ENCODE measurements at regions of chr12 and their contacts with region 1.

Region 1: DNA sequence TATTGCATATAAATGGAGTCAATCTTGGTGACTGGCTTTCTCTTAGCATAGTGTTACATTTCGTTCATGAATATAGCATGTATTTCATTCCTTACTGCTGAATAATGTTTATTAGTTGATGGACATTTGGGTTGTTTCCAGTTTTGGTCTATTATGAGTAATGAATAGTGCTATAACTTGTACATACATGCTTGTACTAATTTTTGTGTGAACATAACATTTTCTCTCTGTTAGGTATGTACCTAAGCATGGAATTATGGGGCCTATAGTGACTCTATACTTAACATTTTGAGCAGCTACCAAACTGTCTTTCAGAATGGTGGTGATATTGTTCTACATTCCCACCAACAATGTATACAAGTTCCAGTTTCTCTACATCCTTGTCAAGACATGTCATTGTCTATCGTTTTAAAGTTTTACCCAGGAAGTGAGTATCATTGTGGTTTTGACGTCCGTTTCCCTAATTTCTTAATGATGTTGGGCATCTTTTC is 23.1 kb downstream of the ATP2A2 start:
- DNase-seq: peak; percentile 93
- ATAC-seq: peak; percentile 75
- H3K4me3 ChIP-seq: no peak overlapping the region
- H3K27ac ChIP-seq: peak overlapping the region; percentile 67
- H3K4me1 ChIP-seq: peaks cover 50% of the 10 kb centered on the region
- H3K27me3 ChIP-seq: no peaks in the 10 kb centered on the region
- CTCF ChIP-seq: no peak

Region 2: DNA sequence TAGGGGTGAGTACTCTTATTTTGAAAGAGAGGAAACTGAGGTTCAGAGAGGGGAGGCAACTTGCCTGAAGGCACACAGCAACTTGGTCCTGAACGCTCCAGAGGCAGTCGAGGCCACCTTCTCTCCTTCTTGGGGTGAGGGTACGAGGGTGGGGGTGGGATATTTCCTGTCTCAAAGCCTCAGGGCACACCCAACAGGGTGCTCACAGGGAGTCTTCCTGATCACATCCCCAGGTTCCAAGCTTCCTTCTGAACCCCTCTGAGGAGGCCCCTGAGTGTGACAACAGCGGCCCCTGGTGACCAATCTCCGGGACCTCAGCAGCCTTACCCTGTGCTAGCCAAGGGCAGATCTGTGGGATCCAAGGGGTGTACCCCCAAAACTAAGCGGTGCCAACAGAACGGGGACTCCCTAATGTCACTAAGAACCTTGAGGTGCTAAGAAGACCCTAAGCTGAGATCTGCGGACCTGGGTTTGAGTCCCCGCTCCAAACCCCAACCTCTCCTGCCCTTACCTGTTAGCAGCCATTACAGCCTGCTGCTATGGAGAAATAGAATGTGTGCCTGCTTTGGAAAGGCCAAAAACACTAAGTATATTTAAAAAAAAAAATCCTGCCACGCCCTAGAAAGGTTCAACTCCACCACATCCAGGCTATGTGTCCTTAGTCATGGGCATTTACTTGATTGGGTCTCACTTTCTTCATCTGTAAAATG is 528.8 kb before region 1 on chr12:
- CTCF ChIA-PET with region 1: no interaction called
- POLR2A ChIA-PET with region 1: no interaction called
- intact Hi-C with region 1: no loop called
- DNase-seq: peak; percentile 83
- ATAC-seq: peak; percentile 62
- H3K4me3 ChIP-seq: no peak overlapping the region
- H3K27ac ChIP-seq: no peak overlapping the region
- H3K4me1 ChIP-seq: peaks cover 27% of the 10 kb centered on the region
- H3K27me3 ChIP-seq: no peaks in the 10 kb centered on the region
- CTCF ChIP-seq: peak; percentile 99

Region 3: DNA sequence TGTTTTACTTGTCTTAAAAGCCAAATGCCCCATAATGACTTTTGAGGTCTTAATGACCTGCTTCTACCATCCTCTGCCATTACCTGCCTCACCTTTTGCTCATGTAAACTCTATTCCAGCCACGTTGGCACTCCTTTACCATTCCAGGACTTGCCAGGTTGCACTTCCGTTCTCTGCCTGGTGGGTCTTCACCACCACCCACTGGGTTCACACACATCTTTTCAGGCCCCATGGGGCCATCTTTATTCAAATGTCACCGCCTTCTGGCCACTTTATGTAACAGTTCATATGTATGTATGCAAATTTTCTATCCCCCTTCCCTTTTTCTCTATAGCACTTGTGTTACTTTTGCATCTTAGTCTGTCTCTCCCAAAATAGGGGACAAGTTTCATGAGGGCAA is 34.6 kb after region 1 on chr12:
- CTCF ChIA-PET with region 1: no interaction called
- POLR2A ChIA-PET with region 1: no interaction called
- intact Hi-C with region 1: loop called (anchors 1 kb)
- DNase-seq: peak; percentile 25
- ATAC-seq: peak; percentile 8; the same call in 1 of the 2 replicates
- H3K4me3 ChIP-seq: no peak overlapping the region
- H3K27ac ChIP-seq: peak overlapping the region; percentile 73
- H3K4me1 ChIP-seq: peaks cover 21% of the 10 kb centered on the region
- H3K27me3 ChIP-seq: no peaks in the 10 kb centered on the region
- CTCF ChIP-seq: peak; percentile 61

Region 4: DNA sequence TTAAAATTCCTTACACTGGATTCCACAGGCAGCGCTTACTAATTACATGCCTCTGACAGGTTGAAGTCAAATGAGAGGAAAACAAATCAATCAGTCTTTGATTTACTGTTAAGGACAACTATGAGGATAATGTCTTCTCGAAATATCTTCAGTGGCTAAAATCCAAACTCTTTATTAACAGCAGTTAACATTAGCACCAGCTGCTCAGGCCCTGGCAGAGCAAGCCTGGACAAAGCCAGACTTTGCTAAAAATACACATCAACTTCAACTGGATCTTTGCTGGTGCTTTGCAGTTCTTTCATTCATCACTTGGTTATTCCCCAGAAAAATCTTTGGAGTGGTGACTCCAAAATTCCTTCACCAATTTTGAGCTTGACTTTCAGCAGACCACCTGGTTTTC is 1979.4 kb after region 1 on chr12:
- CTCF ChIA-PET with region 1: no interaction called
- POLR2A ChIA-PET with region 1: interaction called, 12 read pairs
- intact Hi-C with region 1: no loop called
- DNase-seq: no peak
- ATAC-seq: no peak
- H3K4me3 ChIP-seq: no peak overlapping the region
- H3K27ac ChIP-seq: no peak overlapping the region
- H3K4me1 ChIP-seq: no peaks in the 10 kb centered on the region
- H3K27me3 ChIP-seq: no peaks in the 10 kb centered on the region
- CTCF ChIP-seq: no peak